Mammary epithelial cell (primary cell): ENCODE measurements at regions of chr5 and their contacts with region 1.

Region 1: DNA sequence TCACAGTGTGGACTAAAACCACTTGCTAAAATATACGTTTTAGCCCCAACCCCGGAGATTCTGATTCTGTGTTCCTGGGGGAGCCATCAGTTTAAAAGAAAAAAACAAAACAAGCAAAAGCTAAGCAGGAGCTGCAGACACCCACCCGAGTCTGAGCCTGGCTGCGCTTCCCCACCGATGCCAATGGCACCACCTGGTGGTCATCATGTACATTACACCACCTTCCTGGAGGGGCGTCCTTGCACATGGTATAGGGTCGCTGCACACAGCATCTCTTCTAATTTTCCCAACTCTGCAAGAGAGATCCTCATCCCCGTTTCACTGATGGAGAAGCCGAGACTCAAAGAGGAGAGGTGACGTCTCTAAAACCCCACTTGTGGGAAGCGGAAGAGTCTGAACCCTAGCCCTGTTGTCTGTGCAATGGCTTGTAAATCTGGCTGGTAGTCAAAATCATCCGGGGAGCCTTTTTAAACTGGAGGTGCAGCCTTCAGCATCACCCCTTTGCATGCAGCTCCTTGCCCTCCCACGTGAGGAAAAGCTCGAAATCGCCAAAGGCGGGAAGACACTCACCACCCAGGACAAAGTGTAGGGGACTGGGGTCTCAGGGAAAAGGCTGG is 23.1 kb upstream of the CNOT6 start:
- DNase-seq: peak; percentile 12
- H3K4me3 ChIP-seq: no peak overlapping the region
- H3K27ac ChIP-seq: no peak overlapping the region
- H3K4me1 ChIP-seq: no peaks in the 10 kb centered on the region
- H3K27me3 ChIP-seq: no peaks in the 10 kb centered on the region
- CTCF ChIP-seq: peak; percentile 85 to 89

Region 2: DNA sequence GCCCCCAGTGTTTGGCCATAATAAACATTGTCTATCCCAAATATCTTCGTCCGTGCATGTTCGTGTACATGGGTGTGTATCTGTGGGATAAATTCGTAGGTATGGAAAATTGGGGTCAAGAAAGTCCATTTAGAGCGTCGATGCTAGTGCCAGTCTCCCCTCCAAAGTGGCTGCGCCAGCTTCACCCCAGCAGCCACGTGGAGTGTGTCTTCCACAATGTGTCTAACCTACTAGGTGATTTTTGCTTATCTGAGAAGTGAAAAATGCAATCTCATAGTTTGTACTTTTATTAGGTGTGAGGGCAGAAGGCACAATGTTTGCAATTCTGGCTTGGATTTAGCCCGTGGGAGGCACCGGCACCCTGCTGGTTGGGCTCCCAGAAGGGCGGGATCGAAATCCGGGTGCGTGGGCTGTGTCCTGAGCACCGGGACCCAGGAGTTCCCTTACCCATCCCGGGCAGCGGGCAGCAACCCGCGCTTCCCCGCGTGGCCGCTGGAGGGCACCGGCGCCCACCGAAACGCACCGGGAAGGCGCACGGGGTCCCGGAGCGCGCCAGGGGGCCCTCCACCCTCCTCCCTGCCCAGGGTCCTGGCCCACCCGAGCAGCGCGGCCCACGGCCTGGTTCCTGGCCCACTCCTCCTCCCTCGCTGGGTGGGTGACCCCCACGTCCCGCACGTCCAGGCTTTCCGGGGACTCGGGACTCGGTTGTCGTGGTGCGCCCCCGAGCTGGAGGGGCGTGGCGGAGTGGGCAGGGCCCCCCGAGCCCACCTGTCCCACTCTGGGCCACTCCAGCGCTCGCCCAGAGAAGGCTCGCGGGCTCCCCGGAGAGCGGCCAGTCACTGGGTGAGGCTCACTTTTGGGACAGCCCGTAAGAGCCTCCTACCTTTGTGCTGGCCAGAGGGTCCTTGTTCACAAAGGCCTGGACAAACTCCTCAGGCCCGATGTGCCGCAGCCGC is 344.1 kb before region 1 on chr5:
- CTCF ChIA-PET with region 1: no interaction called
- dilution Hi-C with region 1: no loop called
- in situ Hi-C with region 1: no loop called
- intact Hi-C with region 1: loop called (anchors 2 kb)
- DNase-seq: no peak
- H3K4me3 ChIP-seq: no peak overlapping the region
- H3K27ac ChIP-seq: no peak overlapping the region
- H3K4me1 ChIP-seq: peaks cover 4% of the 10 kb centered on the region
- H3K27me3 ChIP-seq: no peaks in the 10 kb centered on the region
- CTCF ChIP-seq: peak; percentile 60 to 82

Region 3: GRCh38 chr5:180201051-180201987 is 269.8 kb before region 1 on chr5:
- CTCF ChIA-PET with region 1: no interaction called
- dilution Hi-C with region 1: no loop called
- in situ Hi-C with region 1: no loop called
- intact Hi-C with region 1: loop called (anchors 2 kb)
- DNase-seq: no peak
- H3K4me3 ChIP-seq: no peak overlapping the region
- H3K27ac ChIP-seq: no peak overlapping the region
- H3K4me1 ChIP-seq: no peaks in the 10 kb centered on the region
- H3K27me3 ChIP-seq: no peaks in the 10 kb centered on the region
- CTCF ChIP-seq: peak in 1 of 2 donors; percentile 30

Region 4: GRCh38 chr5:180212363-180213255 is 258.5 kb before region 1 on chr5:
- CTCF ChIA-PET with region 1: no interaction called
- dilution Hi-C with region 1: loop called (anchors 5 kb)
- in situ Hi-C with region 1: no loop called
- intact Hi-C with region 1: no loop called
- DNase-seq: no peak
- H3K4me3 ChIP-seq: no peak overlapping the region
- H3K27ac ChIP-seq: no peak overlapping the region
- H3K4me1 ChIP-seq: peaks cover 4% of the 10 kb centered on the region
- H3K27me3 ChIP-seq: peaks cover 10% of the 10 kb centered on the region
- CTCF ChIP-seq: no peak

Region 5: GRCh38 chr5:180291943-180292831 is 178.9 kb before region 1 on chr5 and contains the start of gene MAPK9:
- CTCF ChIA-PET with region 1: interaction called, 4 read pairs
- dilution Hi-C with region 1: no loop called
- in situ Hi-C with region 1: loop called in 1 of 2 experiments (anchors 10 kb)
- intact Hi-C with region 1: loop called (anchors 1 kb)
- DNase-seq: peak; percentile 75
- H3K4me3 ChIP-seq: peak within 1 kb of the TSS; percentile 78 to 81 (median 81)
- H3K27ac ChIP-seq: peak within 1 kb of the TSS; percentile 33
- H3K4me1 ChIP-seq: peaks cover 5% of the 10 kb centered on the region
- H3K27me3 ChIP-seq: no peaks in the 10 kb centered on the region
- CTCF ChIP-seq: no peak
- total RNA-seq, gene MAPK9: 24.2 to 38.2 TPM

Region 6: DNA sequence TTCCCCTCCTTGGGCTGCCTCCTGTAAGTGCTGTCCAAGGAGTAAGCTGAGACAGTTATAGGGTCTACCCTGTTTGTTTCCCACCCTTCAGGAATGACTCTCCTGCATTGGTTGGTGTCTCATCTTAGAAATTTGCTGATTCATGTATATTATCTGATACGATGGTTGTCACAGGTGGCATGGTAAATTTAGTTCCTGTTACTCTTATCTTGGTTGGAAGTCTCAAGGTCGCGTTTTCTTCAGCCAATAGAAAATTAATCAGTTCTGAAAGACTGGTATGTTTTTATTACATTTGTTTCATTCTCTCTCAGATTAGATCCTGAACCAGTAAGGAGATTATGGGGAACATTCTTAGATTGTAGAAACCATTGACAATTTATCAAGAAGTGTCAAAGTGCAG is 77.5 kb after region 1 on chr5:
- CTCF ChIA-PET with region 1: no interaction called
- dilution Hi-C with region 1: loop called (anchors 5 kb)
- in situ Hi-C with region 1: no loop called
- intact Hi-C with region 1: no loop called
- DNase-seq: no peak
- H3K4me3 ChIP-seq: no peak overlapping the region
- H3K27ac ChIP-seq: no peak overlapping the region
- H3K4me1 ChIP-seq: no peaks in the 10 kb centered on the region
- H3K27me3 ChIP-seq: no peaks in the 10 kb centered on the region
- CTCF ChIP-seq: no peak

Region 7: GRCh38 chr5:180605554-180606214 is 134.6 kb after region 1 on chr5:
- CTCF ChIA-PET with region 1: no interaction called
- dilution Hi-C with region 1: no loop called
- in situ Hi-C with region 1: no loop called
- intact Hi-C with region 1: loop called (anchors 1 kb)
- DNase-seq: peak; percentile 38
- H3K4me3 ChIP-seq: no peak overlapping the region
- H3K27ac ChIP-seq: no peak overlapping the region
- H3K4me1 ChIP-seq: no peaks in the 10 kb centered on the region
- H3K27me3 ChIP-seq: no peaks in the 10 kb centered on the region
- CTCF ChIP-seq: peak; percentile 81 to 82